ENCODE measurements at regions of chr6 and their contacts with region 1.

Region 1: DNA sequence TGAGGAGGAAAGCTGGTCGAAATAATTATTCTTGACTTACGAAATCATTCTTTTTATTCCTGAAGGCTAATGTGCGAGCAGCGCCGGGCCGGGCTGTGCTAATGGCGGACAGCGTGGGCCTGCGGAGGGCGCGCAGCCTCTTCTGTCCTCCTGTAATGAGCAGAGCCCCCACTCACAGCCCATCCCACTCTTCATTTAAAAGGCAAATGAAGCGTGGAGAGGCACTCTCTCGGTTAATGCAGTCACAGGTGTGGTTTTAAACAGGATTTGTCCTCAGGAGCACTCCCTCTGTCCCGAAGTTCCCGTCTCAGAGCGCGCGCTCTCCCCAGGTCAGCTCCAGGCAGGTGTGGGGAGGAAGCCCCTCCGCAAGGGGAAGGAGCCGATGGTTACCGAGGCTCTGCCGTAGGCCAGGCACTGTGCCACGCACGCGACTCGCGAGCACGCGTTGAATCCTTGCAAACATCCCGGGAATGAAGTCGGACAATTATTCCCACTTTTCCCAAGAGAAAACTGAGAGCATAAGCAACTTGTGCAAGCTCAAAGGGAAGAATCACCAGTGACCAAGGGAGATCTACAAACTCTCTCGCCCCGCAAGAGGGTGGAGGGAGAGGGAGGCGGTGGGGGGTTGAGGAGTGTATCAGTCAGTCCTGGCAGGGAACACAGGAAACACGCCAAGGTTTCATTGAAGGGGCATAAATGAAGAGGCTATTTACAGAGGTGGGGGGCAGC is 35.5 kb upstream of the ZFAND3 start:
- DNase-seq: peak in 1 of 2 donors; percentile 87
- H3K4me3 ChIP-seq: peak overlapping the region; percentile 11
- CTCF ChIP-seq: no peak
- POLR2A ChIP-seq: no peak

Region 2: GRCh38 chr6:37653933-37654565 is 130.0 kb before region 1 on chr6:
- intact Hi-C with region 1: no loop called
- DNase-seq: no peak
- H3K4me3 ChIP-seq: no peak overlapping the region
- CTCF ChIP-seq: no peak
- POLR2A ChIP-seq: no peak

Region 3: DNA sequence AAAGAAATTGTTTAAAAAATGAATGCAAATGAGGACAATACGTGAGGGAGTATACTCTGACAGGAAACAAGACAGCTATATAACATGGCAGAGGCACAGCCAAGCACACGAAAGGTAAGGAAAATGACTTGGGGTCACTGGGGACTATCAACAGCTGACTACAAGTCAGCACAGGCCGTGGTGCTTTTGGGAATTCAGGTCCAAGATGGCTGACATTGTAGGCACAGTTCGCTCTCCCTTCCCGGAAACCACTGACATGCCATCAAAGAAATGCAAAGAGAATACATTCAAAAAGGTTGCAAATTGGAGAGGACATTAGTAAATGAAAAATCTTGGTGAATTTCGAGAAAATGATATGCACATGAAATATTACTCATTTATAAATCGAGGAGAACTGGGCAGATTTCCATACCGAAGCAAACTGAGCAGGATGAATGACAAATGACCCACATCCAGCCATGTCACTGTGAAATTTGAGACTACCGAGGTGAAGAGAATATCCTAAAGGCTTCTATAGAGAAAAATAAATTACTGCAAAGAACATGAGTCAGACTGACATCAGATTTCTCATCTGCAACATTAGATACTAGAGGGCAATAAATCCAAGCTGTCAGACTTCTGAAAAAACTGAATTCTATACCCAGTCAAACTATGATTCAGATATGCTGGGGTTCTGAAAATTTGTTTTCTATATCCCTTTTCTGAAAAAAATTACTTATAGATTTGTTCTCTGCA is 464.6 kb after region 1 on chr6:
- intact Hi-C with region 1: no loop called
- DNase-seq: no peak
- H3K4me3 ChIP-seq: no peak overlapping the region
- CTCF ChIP-seq: no peak
- POLR2A ChIP-seq: no peak

Region 4: DNA sequence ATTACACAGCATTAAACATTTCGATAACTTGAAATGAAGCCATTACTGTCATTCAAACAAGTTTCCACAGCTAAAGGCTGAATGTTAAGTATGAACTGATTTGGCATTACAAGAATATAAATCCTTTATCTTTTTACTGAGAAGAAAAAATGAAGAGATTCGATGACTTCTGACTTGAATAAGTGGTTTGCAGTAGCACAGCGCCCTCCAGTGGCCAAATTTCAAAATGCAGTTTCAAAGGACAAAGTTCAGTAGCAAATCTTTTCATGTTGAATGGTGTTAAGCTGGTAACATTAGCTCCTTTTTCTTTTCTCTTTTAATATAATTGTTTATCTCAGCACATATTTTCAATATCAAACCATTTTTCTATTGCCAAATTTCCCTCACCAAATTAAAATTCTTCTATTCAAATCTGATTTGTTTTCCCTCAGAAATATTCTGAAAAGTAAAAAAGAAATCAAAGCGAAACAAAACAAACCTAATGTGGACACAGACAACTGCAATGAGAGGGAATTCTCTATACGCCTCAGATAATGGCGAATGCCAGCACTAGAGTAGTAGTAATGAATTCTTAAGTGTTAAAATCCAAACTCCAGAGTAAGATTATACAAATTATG is 710.0 kb after region 1 on chr6:
- intact Hi-C with region 1: loop called (anchors 10 kb)
- DNase-seq: peak; percentile 85 to 95
- H3K4me3 ChIP-seq: no peak overlapping the region
- CTCF ChIP-seq: peak in 1 of 3 donors; percentile 67
- POLR2A ChIP-seq: no peak

Measured in lower leg skin (tissue), 4 donors.